Activated CD8-positive, alpha-beta T cell treated with anti-CD3 and anti-CD28 coated beads for 36 hours (primary cell): ENCODE measurements at regions of chr10 and their contacts with region 1.

Region 1: DNA sequence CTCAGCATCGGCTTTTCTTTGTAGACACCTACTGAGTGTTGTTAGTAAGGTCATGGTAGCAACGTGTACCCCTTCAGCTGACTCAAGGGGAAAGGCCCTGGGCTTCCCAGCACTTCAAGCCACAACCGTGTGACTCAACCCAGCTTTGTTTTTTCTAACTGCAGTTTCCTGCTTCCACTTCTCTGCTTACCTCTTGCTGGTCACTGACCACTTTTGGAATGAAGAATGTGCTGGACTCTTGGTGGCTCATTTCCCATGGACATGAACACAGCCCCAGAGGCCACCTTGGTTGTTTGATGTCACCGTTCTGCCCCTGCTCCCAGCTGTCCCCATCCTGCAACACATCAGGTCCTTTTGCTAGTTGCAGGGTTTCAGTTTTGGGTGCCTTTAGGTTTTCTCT is 69.5 kb upstream of the ZNF438 start:
- DNase-seq: peak; percentile 87
- ATAC-seq: peak; percentile 99
- H3K4me3 Mint-ChIP-seq: peak overlapping the region; percentile 27
- H3K27ac Mint-ChIP-seq: peak overlapping the region; percentile 85
- H3K4me1 Mint-ChIP-seq: peaks cover 29% of the 10 kb centered on the region
- H3K27me3 Mint-ChIP-seq: peaks cover 2% of the 10 kb centered on the region
- CTCF ChIP-seq: no peak

Region 2: GRCh38 chr10:31136930-31137885 is 36.1 kb after region 1 on chr10:
- CTCF ChIA-PET with region 1: interaction called, 4 read pairs
- POLR2A ChIA-PET with region 1: interaction called, 4 read pairs
- intact Hi-C with region 1: loop called (anchors 5 kb)
- DNase-seq: no peak
- ATAC-seq: peak; percentile 15
- H3K4me3 Mint-ChIP-seq: no peak overlapping the region
- H3K27ac Mint-ChIP-seq: peak overlapping the region; percentile 57
- H3K4me1 Mint-ChIP-seq: peaks cover 38% of the 10 kb centered on the region
- H3K27me3 Mint-ChIP-seq: no peaks in the 10 kb centered on the region
- CTCF ChIP-seq: no peak